Calu3 (cell line): ENCODE measurements at regions of chr12 and their contacts with region 1.

Region 1: DNA sequence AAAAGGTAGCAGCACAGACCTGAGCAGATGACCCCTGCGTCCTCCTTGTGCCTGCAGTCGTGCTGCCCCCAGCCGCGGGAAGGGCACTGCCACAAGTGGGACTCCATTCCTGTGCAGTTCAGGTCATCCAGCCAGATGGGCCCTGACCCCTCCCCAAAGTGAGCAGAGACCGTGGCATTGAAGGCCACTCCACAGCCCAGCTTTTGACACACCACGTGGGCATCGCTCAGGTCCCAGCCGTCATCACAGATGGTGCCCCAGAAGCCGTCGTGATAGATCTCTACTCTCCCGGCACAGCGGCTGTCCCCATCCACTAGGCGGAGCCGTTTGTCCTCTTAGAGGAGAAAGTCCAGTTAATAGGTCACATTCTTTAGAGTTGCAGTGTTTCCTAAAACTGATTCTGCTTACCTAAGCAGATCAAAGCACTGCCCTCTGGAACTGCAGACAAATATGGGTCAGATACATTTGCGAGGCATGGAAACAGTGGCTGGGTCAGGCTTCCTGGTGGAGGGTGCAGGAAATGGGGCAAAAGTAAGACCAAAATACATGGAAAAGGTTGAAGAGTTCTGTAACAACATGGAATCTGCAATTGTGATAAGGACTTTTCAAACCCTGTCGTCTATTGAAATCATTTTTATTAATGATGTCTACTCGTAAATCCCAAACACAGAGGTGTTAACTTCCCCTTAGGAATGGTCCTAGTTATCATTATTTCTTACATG is 69.4 kb downstream of the CD163L1 start:
- DNase-seq: peak; percentile 69
- H3K4me3 Mint-ChIP-seq: no peak overlapping the region
- H3K27ac Mint-ChIP-seq: no peak overlapping the region
- H3K4me1 Mint-ChIP-seq: peaks cover 17% of the 10 kb centered on the region
- H3K27me3 Mint-ChIP-seq: no peaks in the 10 kb centered on the region
- CTCF ChIP-seq: peak; percentile 65

Region 2: GRCh38 chr12:7460375-7461259 is 86.0 kb after region 1 on chr12:
- CTCF ChIA-PET with region 1: no interaction called
- intact Hi-C with region 1: loop called (anchors 2 kb)
- DNase-seq: peak; percentile 66
- H3K4me3 Mint-ChIP-seq: no peak overlapping the region
- H3K27ac Mint-ChIP-seq: no peak overlapping the region
- H3K4me1 Mint-ChIP-seq: no peaks in the 10 kb centered on the region
- H3K27me3 Mint-ChIP-seq: no peaks in the 10 kb centered on the region
- CTCF ChIP-seq: peak; percentile 88